ENCODE measurements at regions of chr14 and their contacts with region 1.

Region 1: GRCh38 chr14:81170104-81170828 is 50.5 kb downstream of the GTF2A1 start:
- DNase-seq: peak; percentile 90
- H3K4me3 Mint-ChIP-seq: peak overlapping the region; percentile 85
- H3K27ac Mint-ChIP-seq: peak overlapping the region; percentile 93
- H3K4me1 Mint-ChIP-seq: peaks cover 12% of the 10 kb centered on the region
- H3K27me3 Mint-ChIP-seq: no peaks in the 10 kb centered on the region

Region 2: GRCh38 chr14:80930836-80931389 is 239.4 kb before region 1 on chr14:
- CTCF ChIA-PET with region 1: interaction called, 3 read pairs
- intact Hi-C with region 1: loop called (anchors 1 kb)
- DNase-seq: peak; percentile 79
- H3K4me3 Mint-ChIP-seq: peak overlapping the region; percentile 33
- H3K27ac Mint-ChIP-seq: peak overlapping the region; percentile 73
- H3K4me1 Mint-ChIP-seq: peaks cover 23% of the 10 kb centered on the region
- H3K27me3 Mint-ChIP-seq: no peaks in the 10 kb centered on the region

Region 3: GRCh38 chr14:80954687-80955299 is 215.5 kb before region 1 on chr14:
- CTCF ChIA-PET with region 1: interaction called, 12 read pairs
- intact Hi-C with region 1: loop called (anchors 1 kb)
- DNase-seq: peak; percentile 81
- H3K4me3 Mint-ChIP-seq: peak overlapping the region; percentile 75
- H3K27ac Mint-ChIP-seq: no peak overlapping the region
- H3K4me1 Mint-ChIP-seq: peaks cover 32% of the 10 kb centered on the region
- H3K27me3 Mint-ChIP-seq: peaks cover 10% of the 10 kb centered on the region

Region 4: DNA sequence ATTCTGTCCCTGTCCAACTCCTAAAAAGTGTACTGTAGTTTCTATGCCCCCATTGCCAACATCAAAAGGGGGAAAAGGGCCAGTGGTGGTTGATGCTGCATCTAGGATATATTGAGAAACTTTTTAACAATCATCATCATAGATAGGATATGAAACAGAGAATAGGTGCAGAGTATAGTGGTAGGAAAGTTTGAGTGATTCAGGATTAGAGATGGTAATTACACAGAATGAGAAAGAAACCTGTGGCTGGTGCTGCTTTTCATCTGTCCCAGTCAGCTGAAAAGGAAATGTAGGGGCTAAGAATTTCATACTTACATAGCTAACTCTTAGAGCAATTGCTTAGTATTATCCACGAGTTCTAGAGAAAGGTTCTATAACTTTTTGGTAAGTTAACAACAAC is 17.1 kb before region 1 on chr14:
- CTCF ChIA-PET with region 1: interaction called, 3 read pairs
- intact Hi-C with region 1: loop called (anchors 1 kb)
- DNase-seq: peak; percentile 31
- H3K4me3 Mint-ChIP-seq: no peak overlapping the region
- H3K27ac Mint-ChIP-seq: no peak overlapping the region
- H3K4me1 Mint-ChIP-seq: peaks cover 18% of the 10 kb centered on the region
- H3K27me3 Mint-ChIP-seq: peaks cover 10% of the 10 kb centered on the region

Region 5: DNA sequence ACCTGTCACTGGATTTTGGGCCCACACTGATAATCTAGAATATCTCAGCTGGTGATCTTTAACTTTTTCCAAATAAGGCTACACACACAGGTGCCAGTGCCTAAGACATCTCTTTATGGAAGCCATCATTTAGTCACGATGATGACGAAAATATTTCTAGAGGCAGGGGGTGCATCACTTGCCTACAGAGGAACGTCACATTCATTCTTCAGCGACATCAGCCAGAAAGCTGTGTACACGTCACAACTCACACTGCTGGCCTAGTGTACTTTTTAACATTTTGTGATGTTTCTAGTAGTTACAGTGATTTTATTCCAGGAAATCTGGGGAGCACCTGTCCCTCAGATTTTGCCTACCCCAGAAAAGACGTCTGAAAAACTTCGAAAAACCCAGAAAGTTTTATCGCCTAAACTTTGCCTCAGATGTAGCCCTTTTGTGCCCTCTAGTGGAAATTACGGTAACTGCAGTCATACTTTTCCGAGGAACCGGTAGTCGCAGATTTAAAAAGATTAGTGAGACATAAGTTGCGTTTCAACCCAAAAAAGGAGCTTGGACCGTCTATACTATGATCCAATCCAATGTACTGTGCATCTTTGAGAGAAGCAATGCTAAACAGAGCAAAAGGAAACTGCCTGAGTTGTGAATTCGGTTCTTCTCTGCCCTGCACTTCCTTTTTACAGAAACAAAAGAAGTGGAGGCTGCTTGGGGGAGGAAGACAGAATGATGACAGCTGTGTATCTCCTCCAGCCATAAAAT is 294.2 kb after region 1 on chr14:
- CTCF ChIA-PET with region 1: interaction called, 17 read pairs
- intact Hi-C with region 1: loop called (anchors 2 kb)
- DNase-seq: peak; percentile 75
- H3K4me3 Mint-ChIP-seq: peak overlapping the region; percentile 73
- H3K27ac Mint-ChIP-seq: peak overlapping the region; percentile 78
- H3K4me1 Mint-ChIP-seq: peaks cover 9% of the 10 kb centered on the region
- H3K27me3 Mint-ChIP-seq: no peaks in the 10 kb centered on the region